ENCODE measurements at regions of chr1 and their contacts with region 1.

Region 1: DNA sequence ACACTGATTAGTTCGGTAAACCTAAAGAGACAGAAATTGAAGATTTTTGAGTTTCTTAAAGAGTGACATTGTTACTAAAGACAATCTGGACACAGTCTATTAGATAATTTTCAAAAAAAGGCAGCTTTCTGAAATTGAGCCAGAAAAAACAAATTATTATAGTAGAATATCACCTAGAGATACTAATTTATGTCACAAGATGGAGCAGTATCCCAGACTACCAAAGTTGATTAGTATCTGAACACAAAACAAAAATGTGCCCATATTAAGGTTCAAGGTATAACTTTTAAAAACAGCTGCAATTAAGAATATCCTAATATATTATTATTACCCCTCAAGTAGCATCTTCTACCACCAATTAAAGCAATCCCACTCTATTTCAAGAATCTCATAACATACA is 40.5 kb upstream of the SYT2 start:
- DNase-seq: no peak
- H3K4me3 ChIP-seq: no peak overlapping the region
- H3K27ac ChIP-seq: no peak overlapping the region
- H3K4me1 ChIP-seq: no peaks in the 10 kb centered on the region
- H3K27me3 ChIP-seq: no peaks in the 10 kb centered on the region
- CTCF ChIP-seq: 0 out of 2 replicates have a peak, but pooled peaks have one; percentile 26

Region 2: DNA sequence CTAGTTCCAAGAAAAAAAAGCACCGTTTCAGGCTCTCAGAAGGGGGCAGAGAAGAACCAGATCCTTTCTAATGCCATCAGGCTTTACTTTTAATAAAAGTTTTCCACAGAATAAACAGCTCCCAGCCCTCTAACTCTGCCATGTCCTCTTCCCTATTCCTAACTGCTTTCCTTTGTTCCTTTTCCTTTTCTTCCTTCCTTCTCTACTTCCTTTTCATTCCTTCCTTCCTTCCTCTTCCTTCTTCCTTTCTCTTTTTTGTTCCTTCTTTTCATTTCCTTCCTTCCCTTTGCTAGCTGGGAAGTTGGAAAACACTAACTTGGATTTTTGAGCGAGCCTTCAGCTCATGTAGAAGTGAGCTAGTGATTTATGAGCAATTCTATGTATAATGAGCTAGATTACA is 11.3 kb after region 1 on chr1:
- CTCF ChIA-PET with region 1: no interaction called
- POLR2A ChIA-PET with region 1: interaction called, 15 read pairs
- intact Hi-C with region 1: no loop called
- DNase-seq: no peak
- H3K4me3 ChIP-seq: no peak overlapping the region
- H3K27ac ChIP-seq: 0 out of 2 replicates have a peak overlapping the region, but pooled peaks have one; percentile 19
- H3K4me1 ChIP-seq: no peaks in the 10 kb centered on the region
- H3K27me3 ChIP-seq: no peaks in the 10 kb centered on the region
- CTCF ChIP-seq: no peak

Region 3: DNA sequence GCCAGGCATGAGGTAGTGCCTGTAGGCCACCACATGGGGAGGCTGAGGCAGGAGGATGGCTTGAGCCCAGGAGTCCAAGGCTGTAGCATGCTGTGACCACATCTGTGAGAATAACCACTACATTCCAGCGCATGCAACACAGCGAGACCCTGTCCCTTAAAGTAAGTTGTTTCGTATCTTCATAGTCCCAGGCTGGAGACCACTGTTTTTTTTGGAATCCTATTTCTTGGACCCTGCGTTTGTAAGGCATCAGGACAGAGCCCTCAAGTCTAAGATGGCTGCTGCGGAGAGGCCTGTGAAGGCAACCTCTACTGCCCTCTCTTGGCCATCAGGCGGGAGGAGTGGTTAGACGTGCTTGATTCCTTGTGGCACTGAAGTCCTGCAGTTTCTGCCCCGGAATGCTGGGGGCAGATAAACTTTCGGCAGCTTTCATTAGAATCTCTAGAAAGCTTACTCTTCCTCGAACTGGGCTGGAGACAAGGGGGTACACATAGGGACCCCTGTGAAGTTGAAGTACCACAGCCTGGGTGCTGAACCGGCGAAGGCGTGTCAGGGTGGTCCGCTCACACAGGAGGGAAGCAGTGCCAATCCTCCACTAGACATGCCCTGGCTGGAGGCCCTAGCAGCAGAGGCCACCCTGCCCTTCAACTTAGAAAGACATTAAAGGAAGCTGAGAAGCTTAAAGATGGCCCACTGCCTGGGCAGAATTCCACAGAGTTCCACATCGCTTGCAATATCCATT is 101.6 kb after region 1 on chr1:
- CTCF ChIA-PET with region 1: no interaction called
- POLR2A ChIA-PET with region 1: no interaction called
- intact Hi-C with region 1: loop called (anchors 1 kb)
- DNase-seq: peak; percentile 46 to 57
- H3K4me3 ChIP-seq: no peak overlapping the region
- H3K27ac ChIP-seq: no peak overlapping the region
- H3K4me1 ChIP-seq: no peaks in the 10 kb centered on the region
- H3K27me3 ChIP-seq: no peaks in the 10 kb centered on the region
- CTCF ChIP-seq: peak; percentile 78

Region 4: GRCh38 chr1:202901555-202901954 is 150.8 kb after region 1 on chr1:
- CTCF ChIA-PET with region 1: no interaction called
- POLR2A ChIA-PET with region 1: no interaction called
- intact Hi-C with region 1: no loop called
- DNase-seq: no peak
- H3K4me3 ChIP-seq: no peak overlapping the region
- H3K27ac ChIP-seq: no peak overlapping the region
- H3K4me1 ChIP-seq: no peaks in the 10 kb centered on the region
- H3K27me3 ChIP-seq: no peaks in the 10 kb centered on the region
- CTCF ChIP-seq: no peak

Region 5: GRCh38 chr1:202998836-202999750 is 248.3 kb after region 1 on chr1:
- CTCF ChIA-PET with region 1: no interaction called
- POLR2A ChIA-PET with region 1: no interaction called
- intact Hi-C with region 1: loop called (anchors 10 kb)
- DNase-seq: peak; percentile 54
- H3K4me3 ChIP-seq: no peak overlapping the region
- H3K27ac ChIP-seq: no peak overlapping the region
- H3K4me1 ChIP-seq: peaks cover 14% of the 10 kb centered on the region
- H3K27me3 ChIP-seq: no peaks in the 10 kb centered on the region
- CTCF ChIP-seq: peak; percentile 90